ENCODE measurements at regions of chr13 and their contacts with region 1.

Region 1: DNA sequence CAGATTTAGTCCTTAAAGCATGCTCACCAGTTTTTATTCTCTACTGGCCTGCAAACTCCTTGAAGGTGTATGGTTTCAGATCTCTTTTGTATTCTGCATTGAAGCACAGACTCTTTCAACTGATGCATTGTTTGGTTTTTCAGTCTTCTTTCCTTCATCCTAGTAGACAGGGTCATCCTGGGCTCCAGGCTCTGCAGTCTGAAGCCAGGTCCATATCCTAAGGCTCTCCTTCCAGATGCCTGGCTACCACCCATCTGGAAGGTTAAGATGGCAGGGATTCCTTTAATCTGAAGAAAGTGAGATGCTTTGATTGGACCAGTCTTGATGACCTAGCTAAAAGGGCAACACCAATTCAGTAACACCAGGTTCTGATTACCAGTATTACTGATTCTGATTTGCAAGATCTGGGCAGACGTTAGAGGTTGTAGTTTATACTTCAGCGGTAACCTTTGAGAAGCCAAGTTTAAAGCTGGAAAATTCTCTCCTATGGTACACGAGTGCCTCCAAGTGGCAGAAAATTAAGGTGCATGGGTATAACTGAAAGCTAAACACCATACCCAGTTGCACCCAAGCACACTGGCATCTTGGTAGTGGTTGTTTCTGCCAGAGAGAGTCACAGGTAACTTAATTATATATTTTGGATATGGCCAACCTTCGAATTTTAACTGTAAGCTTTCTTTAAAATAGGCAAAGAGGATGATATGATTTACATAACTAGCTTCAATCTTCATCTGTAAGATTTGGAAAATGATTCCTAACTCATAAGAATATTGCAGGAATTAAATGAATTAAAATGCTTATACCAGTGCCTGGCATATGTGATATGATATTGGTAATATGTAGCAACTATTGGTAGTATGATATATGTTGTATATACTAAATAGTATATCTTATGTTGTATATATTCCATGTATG is 1651.9 kb upstream of the MIR17HG start:
- DNase-seq: peak; percentile 76
- H3K4me3 ChIP-seq: no peak overlapping the region
- H3K27ac ChIP-seq: no peak overlapping the region
- H3K4me1 ChIP-seq: no peaks in the 10 kb centered on the region
- H3K27me3 ChIP-seq: no peaks in the 10 kb centered on the region
- CTCF ChIP-seq: peak; percentile 82

Region 2: GRCh38 chr13:89066868-89067466 is 628.6 kb before region 1 on chr13:
- CTCF ChIA-PET with region 1: no interaction called
- POLR2A ChIA-PET with region 1: no interaction called
- intact Hi-C with region 1: loop called (anchors 5 kb)
- DNase-seq: peak; percentile 70
- H3K4me3 ChIP-seq: no peak overlapping the region
- H3K27ac ChIP-seq: no peak overlapping the region
- H3K4me1 ChIP-seq: no peaks in the 10 kb centered on the region
- H3K27me3 ChIP-seq: no peaks in the 10 kb centered on the region
- CTCF ChIP-seq: peak; percentile 75

Region 3: DNA sequence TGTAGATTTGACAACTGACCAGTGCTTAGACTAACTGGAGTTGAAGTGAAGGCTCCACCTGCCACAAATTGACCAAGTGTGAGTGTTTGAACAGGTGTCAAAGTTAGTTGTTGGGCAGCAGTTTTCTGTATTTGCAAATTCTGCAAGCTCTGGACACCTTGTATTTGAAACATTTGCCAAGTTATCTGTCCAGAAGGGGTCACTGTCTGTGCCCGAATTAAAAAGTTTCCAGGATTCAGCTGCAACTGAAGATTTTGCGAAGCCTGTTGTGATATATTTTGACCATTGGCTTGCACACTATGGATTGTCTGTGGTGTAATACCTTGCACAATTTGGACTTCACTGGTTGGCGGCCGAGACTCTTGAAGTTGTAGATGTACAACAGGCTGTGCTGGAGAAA is 333.7 kb before region 1 on chr13:
- CTCF ChIA-PET with region 1: interaction called, 3 read pairs
- POLR2A ChIA-PET with region 1: no interaction called
- intact Hi-C with region 1: loop called (anchors 2 kb)
- DNase-seq: peak; percentile 13
- H3K4me3 ChIP-seq: no peak overlapping the region
- H3K27ac ChIP-seq: no peak overlapping the region
- H3K4me1 ChIP-seq: no peaks in the 10 kb centered on the region
- H3K27me3 ChIP-seq: no peaks in the 10 kb centered on the region
- CTCF ChIP-seq: 0 out of 2 replicates have a peak, but pooled peaks have one; percentile 30

Region 4: DNA sequence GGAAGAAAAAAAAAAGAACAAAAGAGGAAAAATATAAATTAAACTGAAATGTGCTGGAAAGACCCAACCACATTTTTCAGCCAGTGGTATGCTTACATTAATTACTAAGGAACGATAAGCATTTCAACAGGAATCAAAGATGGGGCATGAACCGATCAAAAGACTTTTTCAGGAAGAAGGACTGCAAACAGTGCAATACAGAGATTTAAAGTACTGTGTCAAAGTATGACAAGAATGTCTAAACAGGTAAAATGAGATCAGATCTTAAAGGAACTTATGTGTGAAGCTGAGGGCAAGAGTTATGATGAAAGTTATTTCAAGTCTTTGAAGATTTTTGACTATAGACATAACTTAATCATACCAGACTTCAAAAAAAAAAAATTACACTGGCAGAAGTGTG is 262.6 kb before region 1 on chr13:
- CTCF ChIA-PET with region 1: interaction called, 11 read pairs
- POLR2A ChIA-PET with region 1: no interaction called
- intact Hi-C with region 1: loop called (anchors 2 kb)
- DNase-seq: no peak
- H3K4me3 ChIP-seq: no peak overlapping the region
- H3K27ac ChIP-seq: no peak overlapping the region
- H3K4me1 ChIP-seq: no peaks in the 10 kb centered on the region
- H3K27me3 ChIP-seq: no peaks in the 10 kb centered on the region
- CTCF ChIP-seq: no peak

Region 5: DNA sequence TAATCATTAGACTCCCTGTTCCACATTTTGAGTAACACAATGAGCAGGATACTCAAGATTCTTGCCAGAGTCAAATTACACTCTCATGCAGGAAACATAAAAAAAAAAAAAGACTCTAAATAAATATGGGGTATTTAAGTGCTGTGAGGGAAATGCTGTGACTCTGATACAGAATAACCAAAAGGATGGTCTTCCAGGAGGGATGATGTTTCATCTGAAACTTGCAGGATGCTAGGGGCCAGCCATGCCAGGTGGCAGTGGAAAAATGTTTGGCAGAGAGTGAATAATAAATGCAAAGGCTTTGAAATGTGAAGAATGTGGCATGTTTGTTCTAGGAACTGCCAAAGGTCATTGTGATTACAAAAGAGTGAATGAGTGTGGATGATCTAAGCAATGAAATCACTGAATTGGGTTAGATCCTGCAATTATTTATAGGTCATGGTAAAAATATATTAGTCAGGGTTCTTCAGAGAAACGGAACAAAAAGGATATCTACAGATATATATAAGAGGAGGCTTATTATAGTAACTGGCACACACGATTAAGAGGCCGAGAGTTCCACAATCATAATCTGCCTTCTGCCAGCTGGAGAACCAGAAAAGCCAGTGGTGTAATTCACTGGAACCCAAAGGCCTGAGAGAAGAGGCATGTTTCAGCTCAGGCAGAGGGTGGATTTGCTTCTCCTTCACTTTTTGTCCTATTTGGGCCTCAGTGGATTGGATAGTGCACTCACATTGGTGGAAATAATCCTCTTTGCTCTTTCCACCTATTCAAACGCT is 180.9 kb before region 1 on chr13:
- CTCF ChIA-PET with region 1: no interaction called
- POLR2A ChIA-PET with region 1: no interaction called
- intact Hi-C with region 1: loop called (anchors 2 kb)
- DNase-seq: peak; percentile 88
- H3K4me3 ChIP-seq: no peak overlapping the region
- H3K27ac ChIP-seq: peak overlapping the region; percentile 75
- H3K4me1 ChIP-seq: peaks cover 26% of the 10 kb centered on the region
- H3K27me3 ChIP-seq: no peaks in the 10 kb centered on the region
- CTCF ChIP-seq: no peak

Region 6: DNA sequence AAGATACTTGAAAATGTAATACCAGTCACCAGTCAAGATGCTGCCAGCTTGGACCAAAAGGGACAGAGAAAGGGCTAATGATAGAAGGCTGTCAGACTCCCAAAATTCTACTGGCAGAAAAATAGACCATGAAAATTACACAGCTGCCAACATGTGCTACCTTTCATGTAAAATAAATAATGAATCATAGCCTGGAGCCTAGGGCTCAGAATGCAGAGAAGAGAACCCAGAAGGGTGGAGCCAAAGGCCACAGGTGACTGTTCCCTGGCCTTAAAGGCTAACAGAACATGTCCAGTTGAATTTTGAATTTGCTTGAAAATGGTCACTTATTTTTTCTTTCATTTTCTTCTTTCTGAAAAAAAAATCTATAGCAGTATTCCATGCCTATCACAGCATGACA is 175.1 kb before region 1 on chr13:
- CTCF ChIA-PET with region 1: no interaction called
- POLR2A ChIA-PET with region 1: no interaction called
- intact Hi-C with region 1: loop called (anchors 2 kb)
- DNase-seq: no peak
- H3K4me3 ChIP-seq: no peak overlapping the region
- H3K27ac ChIP-seq: peak overlapping the region; percentile 19
- H3K4me1 ChIP-seq: peaks cover 2% of the 10 kb centered on the region
- H3K27me3 ChIP-seq: no peaks in the 10 kb centered on the region
- CTCF ChIP-seq: no peak

Region 7: GRCh38 chr13:89550938-89551337 is 144.7 kb before region 1 on chr13:
- CTCF ChIA-PET with region 1: no interaction called
- POLR2A ChIA-PET with region 1: no interaction called
- intact Hi-C with region 1: no loop called
- DNase-seq: peak; percentile 21
- H3K4me3 ChIP-seq: no peak overlapping the region
- H3K27ac ChIP-seq: no peak overlapping the region
- H3K4me1 ChIP-seq: no peaks in the 10 kb centered on the region
- H3K27me3 ChIP-seq: no peaks in the 10 kb centered on the region
- CTCF ChIP-seq: no peak

Region 8: DNA sequence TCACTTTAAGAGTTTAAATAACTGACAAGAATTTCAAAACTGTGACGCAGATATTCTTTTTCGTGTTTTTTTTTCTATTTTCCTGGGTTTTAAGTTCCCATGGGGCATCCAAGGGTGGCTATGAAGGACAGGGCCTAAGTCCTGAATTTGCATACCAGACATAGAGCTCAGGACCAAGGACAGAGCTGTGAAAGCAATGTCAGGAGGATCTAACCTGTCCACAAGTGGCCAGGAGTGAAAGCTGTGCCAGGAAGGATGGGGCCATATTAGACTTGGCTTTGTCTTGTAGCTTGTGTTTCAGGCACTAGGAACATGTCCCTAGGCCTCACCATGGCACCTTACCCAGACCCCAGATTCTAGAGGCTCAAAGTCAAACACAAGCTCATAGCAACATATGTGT is 1362.5 kb after region 1 on chr13:
- CTCF ChIA-PET with region 1: no interaction called
- POLR2A ChIA-PET with region 1: interaction called, 12 read pairs
- intact Hi-C with region 1: no loop called
- DNase-seq: no peak
- H3K4me3 ChIP-seq: no peak overlapping the region
- H3K27ac ChIP-seq: no peak overlapping the region
- H3K4me1 ChIP-seq: no peaks in the 10 kb centered on the region
- H3K27me3 ChIP-seq: no peaks in the 10 kb centered on the region
- CTCF ChIP-seq: no peak